Activated T-helper 2 cell treated with anti-CD3 and anti-CD28 coated beads, Interferon-gamma antibody, Interleukin-2, Interleukin-4, amounts not matched to agents 10 μg/mL and 5 μg/mL and 100 μg/mL, durations not matched to agents 14 hours and 24 hours and 36 hours (primary cell): ENCODE measurements at regions of chr1 and their contacts with region 1.

Region 1: DNA sequence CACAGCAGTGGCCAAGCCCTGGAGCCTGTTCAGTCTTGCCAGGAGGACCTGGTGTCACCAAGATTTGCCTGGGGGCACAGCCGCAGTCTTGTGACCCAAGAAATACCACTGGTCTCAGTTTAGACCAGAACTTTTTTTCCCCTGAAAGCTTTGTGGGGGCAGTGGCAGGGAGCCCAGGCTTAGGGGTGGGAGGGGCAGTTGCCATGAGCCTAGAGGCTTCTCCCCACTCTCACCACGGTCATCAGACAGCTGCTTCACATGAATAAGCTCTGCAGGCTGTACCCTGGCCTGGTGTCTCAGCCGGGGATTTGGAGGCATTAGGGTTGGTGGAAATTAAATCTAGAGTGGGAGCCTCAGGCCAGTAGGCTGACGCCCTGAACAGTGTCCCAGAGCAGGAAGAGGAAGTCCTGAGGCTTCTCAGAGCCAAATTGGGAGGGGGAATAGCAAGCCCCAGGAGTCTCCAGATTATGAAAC is 73.7 kb downstream of the SLC16A1 start:
- DNase-seq: no peak
- H3K4me3 Mint-ChIP-seq: no peak overlapping the region
- H3K27ac Mint-ChIP-seq: no peak overlapping the region
- H3K4me1 Mint-ChIP-seq: peaks cover 3% of the 10 kb centered on the region
- H3K27me3 Mint-ChIP-seq: peaks cover 14% of the 10 kb centered on the region

Region 2: DNA sequence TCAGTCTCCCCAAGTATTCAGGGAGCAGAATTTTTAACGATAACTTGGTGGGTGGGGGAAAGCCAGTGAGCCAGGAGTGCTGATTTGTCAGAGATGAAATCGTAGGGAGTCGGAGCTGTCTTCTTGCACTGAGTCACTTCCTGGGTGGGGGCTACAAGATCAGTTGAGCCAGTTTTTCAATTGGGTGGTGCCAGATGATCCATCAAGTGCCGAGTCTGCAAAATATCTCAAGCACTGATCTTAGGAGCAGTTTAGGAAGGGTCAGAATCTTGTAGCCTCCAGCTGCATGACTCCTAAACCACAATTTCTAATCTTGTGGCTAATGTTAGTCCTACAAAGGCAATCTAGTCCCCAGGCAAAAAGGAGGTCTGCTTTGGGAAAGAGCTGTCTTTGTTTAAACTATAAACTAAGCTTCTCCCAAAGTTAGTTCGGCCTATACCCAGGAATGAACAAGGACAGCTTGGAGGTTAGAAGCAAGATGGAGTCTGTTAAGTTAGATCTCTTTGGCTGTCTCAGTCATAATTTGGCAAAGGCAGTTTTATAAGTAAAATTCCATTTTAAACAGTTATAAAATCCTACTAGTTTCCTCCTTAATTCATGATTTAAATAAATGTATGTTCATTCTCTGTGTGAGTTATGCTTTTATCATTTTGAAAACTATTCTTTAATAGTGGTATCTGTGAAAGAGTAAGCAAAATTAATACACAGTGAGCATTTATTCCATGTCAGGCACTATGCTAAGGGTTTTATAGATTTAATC is 21.9 kb after region 1 on chr1:
- intact Hi-C with region 1: loop called (anchors 2 kb)
- DNase-seq: peak; percentile 50
- H3K4me3 Mint-ChIP-seq: no peak overlapping the region
- H3K27ac Mint-ChIP-seq: peak overlapping the region; percentile 85
- H3K4me1 Mint-ChIP-seq: peaks cover 34% of the 10 kb centered on the region
- H3K27me3 Mint-ChIP-seq: no peaks in the 10 kb centered on the region

Region 3: DNA sequence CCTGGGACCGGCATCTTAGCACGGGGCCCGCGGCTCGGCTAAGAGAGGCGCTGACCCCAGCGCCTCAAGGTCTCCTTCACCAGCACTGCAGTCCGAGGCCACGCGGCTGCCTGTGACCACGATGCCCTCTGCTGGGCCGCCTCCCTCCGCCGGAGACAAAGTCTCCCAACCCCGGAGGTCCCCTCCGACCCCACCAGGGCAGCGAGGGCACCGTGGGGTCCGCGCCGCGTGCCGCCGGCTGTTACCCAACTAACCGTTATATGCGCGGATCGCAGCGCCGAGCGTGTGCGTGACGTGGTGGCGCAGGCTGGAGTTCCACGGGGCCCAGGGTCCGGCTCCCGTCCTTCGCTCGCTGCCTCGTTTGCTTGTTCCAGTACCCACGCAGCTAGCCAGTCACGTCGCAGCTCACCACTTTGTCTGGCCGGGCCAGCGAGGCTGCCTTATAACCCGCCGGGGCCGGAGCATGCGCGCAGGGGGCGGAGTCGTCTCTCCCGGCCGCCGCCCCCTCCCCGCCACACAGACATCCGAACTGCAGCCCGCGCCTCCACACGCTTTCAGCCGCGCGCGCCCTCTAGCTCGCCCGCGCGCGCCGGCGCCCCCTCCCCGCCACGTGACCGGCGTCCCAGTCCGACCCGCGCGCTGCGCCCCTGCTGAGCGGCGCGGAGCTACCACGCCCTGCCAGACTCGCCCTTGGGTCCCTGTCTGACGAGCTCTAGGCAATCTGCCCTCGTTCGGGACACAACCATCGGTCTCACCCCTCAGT is 73.7 kb after region 1 on chr1 and contains the start of gene SLC16A1:
- intact Hi-C with region 1: loop called (anchors 1 kb)
- DNase-seq: peak; percentile 88
- H3K4me3 Mint-ChIP-seq: peak within 1 kb of the TSS; percentile 100
- H3K27ac Mint-ChIP-seq: peak within 1 kb of the TSS; percentile 100
- H3K4me1 Mint-ChIP-seq: peaks cover 56% of the 10 kb centered on the region
- H3K27me3 Mint-ChIP-seq: no peaks in the 10 kb centered on the region
- total RNA-seq, gene SLC16A1: 75.8 and 77.1 TPM in 2 replicates

Region 4: GRCh38 chr1:113042285-113043143 is 160.2 kb after region 1 on chr1:
- intact Hi-C with region 1: loop called (anchors 2 kb)
- DNase-seq: no peak
- H3K4me3 Mint-ChIP-seq: no peak overlapping the region
- H3K27ac Mint-ChIP-seq: no peak overlapping the region
- H3K4me1 Mint-ChIP-seq: peaks cover 35% of the 10 kb centered on the region
- H3K27me3 Mint-ChIP-seq: no peaks in the 10 kb centered on the region